GM12878 (cell line): ENCODE measurements at regions of chr17 and their contacts with region 1.

Region 1: GRCh38 chr17:72539981-72540897 is 419.4 kb downstream of the SOX9 start:
- DNase-seq: no peak
- ATAC-seq: peak; percentile 99
- H3K4me3 ChIP-seq: no peak overlapping the region
- H3K27ac ChIP-seq: no peak overlapping the region
- H3K4me1 ChIP-seq: peaks cover 5% of the 10 kb centered on the region
- H3K27me3 ChIP-seq: no peaks in the 10 kb centered on the region
- CTCF ChIP-seq: peak; percentile 68 to 94 (median 84)
- EP300 ChIP-seq: 0 out of 4 replicates have a peak, but pooled peaks have one; percentile 7 to 25
- POLR2A ChIP-seq: no peak
- RAD21 ChIP-seq: peak; percentile 90

Region 2: GRCh38 chr17:70767102-70767701 is 1773.0 kb before region 1 on chr17:
- CTCF ChIA-PET with region 1: interaction called, 18 read pairs
- POLR2A ChIA-PET with region 1: no interaction called
- RAD21 ChIA-PET with region 1: interaction called, 15 read pairs
- SMC1A ChIA-PET with region 1: interaction called, 4 read pairs
- in situ Hi-C with region 1: loop called (anchors 10 kb)
- intact Hi-C with region 1: loop called (anchors 5 kb)
- DNase-seq: no peak
- ATAC-seq: no peak
- H3K4me3 ChIP-seq: no peak overlapping the region
- H3K27ac ChIP-seq: no peak overlapping the region
- H3K4me1 ChIP-seq: no peaks in the 10 kb centered on the region
- H3K27me3 ChIP-seq: no peaks in the 10 kb centered on the region
- CTCF ChIP-seq: peak; percentile 43 to 55 (median 43)
- EP300 ChIP-seq: no peak
- POLR2A ChIP-seq: no peak
- RAD21 ChIP-seq: peak; percentile 81

Region 3: DNA sequence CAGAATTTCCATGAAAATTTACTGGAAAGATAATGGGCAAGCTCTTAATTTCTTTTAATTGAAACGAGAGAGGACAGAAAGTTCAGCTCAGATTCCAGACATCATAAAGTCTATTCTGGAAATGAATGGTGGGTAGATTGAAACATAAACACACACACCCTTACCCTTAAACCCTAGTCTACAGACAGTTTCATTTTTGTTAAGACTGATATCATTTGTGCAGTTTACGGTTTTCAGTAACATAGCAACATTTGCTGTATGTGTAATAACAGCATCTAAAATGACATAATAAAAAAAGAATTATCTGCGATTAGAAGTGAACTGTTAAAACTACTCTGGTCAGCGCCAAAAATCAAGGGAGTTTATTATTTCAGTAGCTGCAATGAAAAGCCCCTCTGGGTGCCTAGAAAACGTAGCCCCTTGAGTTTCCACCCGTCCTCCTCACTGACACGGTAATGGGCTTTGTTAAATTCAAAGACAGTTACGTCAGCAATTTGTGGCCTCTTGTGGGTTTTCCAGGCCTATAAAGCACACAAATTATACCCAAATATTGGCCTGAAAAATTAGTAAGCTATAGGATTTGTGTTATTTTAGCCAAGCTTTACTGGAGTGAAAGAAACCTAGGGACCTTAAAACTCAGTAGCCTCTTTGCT is 940.0 kb before region 1 on chr17:
- CTCF ChIA-PET with region 1: no interaction called
- POLR2A ChIA-PET with region 1: no interaction called
- RAD21 ChIA-PET with region 1: no interaction called
- SMC1A ChIA-PET with region 1: no interaction called
- in situ Hi-C with region 1: loop called (anchors 25 kb)
- intact Hi-C with region 1: no loop called
- DNase-seq: no peak
- ATAC-seq: peak; percentile 56
- H3K4me3 ChIP-seq: no peak overlapping the region
- H3K27ac ChIP-seq: no peak overlapping the region
- H3K4me1 ChIP-seq: no peaks in the 10 kb centered on the region
- H3K27me3 ChIP-seq: no peaks in the 10 kb centered on the region
- CTCF ChIP-seq: no peak
- EP300 ChIP-seq: no peak
- POLR2A ChIP-seq: no peak
- RAD21 ChIP-seq: no peak

Region 4: GRCh38 chr17:72388765-72389473 is 151.3 kb before region 1 on chr17:
- CTCF ChIA-PET with region 1: interaction called, 14 read pairs
- POLR2A ChIA-PET with region 1: no interaction called
- RAD21 ChIA-PET with region 1: interaction called, 12 read pairs
- SMC1A ChIA-PET with region 1: interaction called, 14 read pairs
- in situ Hi-C with region 1: no loop called
- intact Hi-C with region 1: no loop called
- DNase-seq: peak; percentile 93
- ATAC-seq: peak; percentile 77
- H3K4me3 ChIP-seq: no peak overlapping the region
- H3K27ac ChIP-seq: 0 out of 2 replicates have a peak overlapping the region, but pooled peaks have one; percentile 14
- H3K4me1 ChIP-seq: peaks cover 40% of the 10 kb centered on the region
- H3K27me3 ChIP-seq: no peaks in the 10 kb centered on the region
- CTCF ChIP-seq: peak; percentile 41 to 64 (median 47); a peak in 5 of 6 replicates
- EP300 ChIP-seq: peak in 1 of 2 experiments; percentile 62; a peak in 1 of 4 replicates
- POLR2A ChIP-seq: no peak
- RAD21 ChIP-seq: peak; percentile 55; the same call in 1 of the 2 replicates

Region 5: GRCh38 chr17:72465191-72466024 is 74.8 kb before region 1 on chr17:
- CTCF ChIA-PET with region 1: interaction called, 11 read pairs
- POLR2A ChIA-PET with region 1: interaction called, 14 read pairs
- RAD21 ChIA-PET with region 1: interaction called, 57 read pairs
- SMC1A ChIA-PET with region 1: interaction called, 65 read pairs
- in situ Hi-C with region 1: no loop called
- intact Hi-C with region 1: loop called (anchors 2 kb)
- DNase-seq: peak; percentile 93
- ATAC-seq: peak; percentile 78
- H3K4me3 ChIP-seq: peak overlapping the region; percentile 10; the same call in 1 of the 2 replicates
- H3K27ac ChIP-seq: peak overlapping the region; percentile 78
- H3K4me1 ChIP-seq: peaks cover 41% of the 10 kb centered on the region
- H3K27me3 ChIP-seq: no peaks in the 10 kb centered on the region
- CTCF ChIP-seq: peak in 1 of 3 experiments; percentile 30; a peak in 1 of 6 replicates
- EP300 ChIP-seq: peak; percentile 38 to 66; a peak in 3 of 4 replicates
- POLR2A ChIP-seq: no peak
- RAD21 ChIP-seq: 0 out of 2 replicates have a peak, but pooled peaks have one; percentile 1

Region 6: GRCh38 chr17:72516772-72517399 is 23.4 kb before region 1 on chr17:
- CTCF ChIA-PET with region 1: interaction called, 46 read pairs
- POLR2A ChIA-PET with region 1: interaction called, 13 read pairs
- RAD21 ChIA-PET with region 1: interaction called, 53 read pairs
- SMC1A ChIA-PET with region 1: interaction called, 66 read pairs
- in situ Hi-C with region 1: no loop called
- intact Hi-C with region 1: loop called (anchors 2 kb)
- DNase-seq: no peak
- ATAC-seq: peak; percentile 53
- H3K4me3 ChIP-seq: no peak overlapping the region
- H3K27ac ChIP-seq: peak overlapping the region; percentile 84
- H3K4me1 ChIP-seq: peaks cover 56% of the 10 kb centered on the region
- H3K27me3 ChIP-seq: no peaks in the 10 kb centered on the region
- CTCF ChIP-seq: peak in 2 of 3 experiments; percentile 8 to 37; a peak in 1 of 6 replicates
- EP300 ChIP-seq: no peak
- POLR2A ChIP-seq: no peak
- RAD21 ChIP-seq: no peak